GM10248 (cell line): ENCODE measurements at regions of chr16 and their contacts with region 1.

Region 1: DNA sequence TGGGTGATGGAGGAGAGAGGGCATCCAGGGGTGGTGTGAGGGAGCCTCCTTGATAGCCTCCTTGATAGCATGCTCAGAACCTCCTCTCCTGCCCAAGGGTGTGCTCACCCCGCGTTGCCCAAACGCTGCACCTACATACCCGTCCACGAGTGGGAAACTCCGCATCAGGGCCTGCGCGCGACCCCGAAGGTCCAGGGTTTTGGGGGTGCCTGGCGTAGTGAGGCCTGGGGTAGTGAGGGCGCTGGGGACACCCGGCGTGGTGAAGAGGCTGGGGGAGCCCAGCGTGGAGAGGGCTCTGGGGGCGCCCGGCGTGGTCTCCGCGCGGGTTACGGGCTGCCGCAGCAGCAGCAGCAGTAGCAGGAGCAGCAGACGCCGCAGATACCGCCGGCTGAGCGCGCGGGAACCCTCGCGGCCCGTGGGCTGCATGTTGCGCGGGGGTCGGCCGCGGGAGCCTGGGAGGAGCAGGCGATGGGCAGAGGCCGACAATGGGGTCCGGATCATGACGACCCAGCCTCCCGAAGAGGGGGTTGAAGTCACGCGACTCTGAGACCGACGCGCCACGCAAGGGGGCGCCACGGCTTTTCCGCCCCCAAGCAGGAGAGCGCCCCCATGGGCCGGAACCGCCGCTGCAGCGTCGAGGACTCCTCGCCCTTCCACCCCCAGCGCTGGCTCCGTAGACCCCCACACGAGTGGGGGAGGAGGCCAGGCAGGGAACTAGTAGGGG is at the start of gene DPEP3:
- DNase-seq: no peak
- CTCF ChIP-seq: peak; percentile 22

Region 2: DNA sequence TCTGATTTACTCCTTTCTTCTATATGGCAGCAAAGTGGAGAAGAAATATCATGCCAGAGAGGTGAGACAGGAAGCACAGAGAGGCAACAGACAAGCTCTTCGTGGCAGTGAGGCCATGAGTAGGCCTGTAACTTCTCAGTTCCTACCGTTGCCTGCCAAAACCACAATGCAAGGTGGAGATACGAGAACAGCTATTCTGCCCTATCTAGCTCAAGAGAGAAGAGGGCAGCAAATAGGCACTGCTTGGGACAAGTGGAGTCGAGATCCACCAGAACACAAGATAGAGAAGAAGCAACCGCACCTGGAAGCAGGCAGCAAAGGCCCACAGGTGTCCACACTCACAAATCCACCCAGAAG is 198.6 kb before region 1 on chr16:
- CTCF ChIA-PET with region 1: no interaction called
- POLR2A ChIA-PET with region 1: no interaction called
- DNase-seq: peak; percentile 46
- CTCF ChIP-seq: no peak

Region 3: GRCh38 chr16:67993189-67994039 is 13.3 kb after region 1 on chr16:
- CTCF ChIA-PET with region 1: interaction called, 21 read pairs
- POLR2A ChIA-PET with region 1: no interaction called
- DNase-seq: peak; percentile 89
- CTCF ChIP-seq: peak; percentile 93